Activated CD4-positive, alpha-beta T cell treated with anti-CD3 and anti-CD28 coated beads, Interleukin-2, amount 10 ng/mL, durations not matched to agents 24 days and 14 days (primary cell): ENCODE measurements at regions of chr2 and their contacts with region 1.

Region 1: GRCh38 chr2:136117909-136118818 is at the start of gene CXCR4:
- DNase-seq: peak; percentile 97
- H3K4me3 Mint-ChIP-seq: peak within 1 kb of the TSS; percentile 98
- H3K27ac Mint-ChIP-seq: peak within 1 kb of the TSS; percentile 95
- H3K4me1 Mint-ChIP-seq: peaks cover 63% of the 10 kb centered on the region
- H3K27me3 Mint-ChIP-seq: peaks cover 35% of the 10 kb centered on the region
- total RNA-seq, gene CXCR4: 88.8 and 92.7 TPM in 2 replicates

Region 2: DNA sequence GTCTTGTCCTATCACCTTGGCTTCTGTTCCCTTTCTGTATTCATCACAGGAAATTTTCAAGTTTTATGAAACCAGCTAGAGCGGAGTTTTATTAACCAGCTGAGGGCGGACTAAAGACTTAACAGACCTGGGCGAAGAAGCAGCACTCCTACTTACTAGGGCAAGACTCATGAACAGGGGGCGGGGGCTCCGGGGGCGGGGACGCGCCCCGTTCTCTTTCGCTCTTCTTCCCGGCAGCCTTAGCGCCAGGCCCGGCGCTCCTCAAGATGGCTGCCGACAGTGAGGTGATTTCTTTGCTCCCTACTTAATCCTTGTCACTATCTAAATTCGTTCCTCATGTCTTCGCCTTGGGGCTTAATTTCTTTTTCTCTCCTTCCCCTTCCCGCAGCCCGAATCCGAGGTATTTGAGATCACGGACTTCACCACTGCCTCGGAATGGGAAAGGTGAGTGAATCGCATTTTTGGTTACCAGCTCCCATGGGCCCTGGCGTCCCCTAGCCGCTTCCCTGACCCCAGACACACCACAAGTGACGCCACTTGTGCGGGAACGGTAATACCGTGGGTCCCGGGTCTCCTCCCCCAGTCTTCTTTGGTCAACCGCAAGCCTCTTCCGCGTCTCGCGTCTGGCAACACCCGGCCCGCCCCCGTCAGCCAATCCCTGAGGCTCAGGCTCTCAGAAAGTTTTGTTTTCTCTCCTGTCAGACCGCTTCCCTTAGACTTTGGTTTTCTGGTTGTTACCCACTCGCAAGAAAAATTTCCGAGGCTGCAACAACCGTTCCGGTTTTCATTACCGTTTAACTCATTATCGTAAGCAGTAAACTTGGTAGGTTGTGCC is 1065.9 kb before region 1 on chr2 and contains the start of gene RAB3GAP1:
- intact Hi-C with region 1: loop called (anchors 2 kb)
- DNase-seq: peak; percentile 98
- H3K4me3 Mint-ChIP-seq: peak within 1 kb of the TSS; percentile 94
- H3K27ac Mint-ChIP-seq: peak within 1 kb of the TSS; percentile 100
- H3K4me1 Mint-ChIP-seq: peaks cover 38% of the 10 kb centered on the region
- H3K27me3 Mint-ChIP-seq: peaks cover 2% of the 10 kb centered on the region
- total RNA-seq, gene RAB3GAP1: 24.2 and 26.3 TPM in 2 replicates

Region 3: DNA sequence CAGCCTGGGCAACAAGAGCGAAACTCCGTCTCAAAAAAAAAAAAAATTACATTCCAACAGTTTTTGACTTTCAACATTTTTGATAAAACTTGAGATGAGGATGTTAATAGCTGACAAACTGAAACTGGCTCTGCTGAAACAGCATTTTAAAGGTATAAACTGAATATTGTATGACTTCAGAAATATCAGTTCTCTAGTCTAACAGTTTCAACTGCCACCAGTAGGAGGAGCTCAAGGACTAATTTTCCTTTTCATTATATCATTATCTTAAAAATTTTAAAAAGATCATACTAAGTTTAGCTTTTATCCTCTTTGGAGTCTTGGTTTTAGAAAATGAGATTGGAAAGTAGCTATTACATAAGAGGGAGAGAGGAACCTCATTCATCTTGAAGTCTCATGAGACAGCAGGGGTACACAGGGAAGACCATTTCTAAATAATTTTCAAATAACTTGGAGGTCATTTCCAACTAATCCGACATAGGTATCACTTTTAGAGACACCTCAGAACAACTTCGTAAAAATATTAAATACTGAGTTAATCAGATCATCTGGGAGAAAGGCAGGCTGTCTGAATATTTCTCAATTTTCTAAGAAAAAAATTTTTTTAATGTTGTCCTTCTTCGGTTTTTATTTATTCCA is 204.3 kb before region 1 on chr2:
- intact Hi-C with region 1: loop called (anchors 1 kb)
- DNase-seq: peak; percentile 86
- H3K4me3 Mint-ChIP-seq: no peak overlapping the region
- H3K27ac Mint-ChIP-seq: no peak overlapping the region
- H3K4me1 Mint-ChIP-seq: peaks cover 18% of the 10 kb centered on the region
- H3K27me3 Mint-ChIP-seq: no peaks in the 10 kb centered on the region

Region 4: GRCh38 chr2:136051001-136051724 is 67.0 kb before region 1 on chr2:
- intact Hi-C with region 1: loop called (anchors 1 kb)
- DNase-seq: peak; percentile 79
- H3K4me3 Mint-ChIP-seq: peak overlapping the region; percentile 74
- H3K27ac Mint-ChIP-seq: peak overlapping the region; percentile 94
- H3K4me1 Mint-ChIP-seq: peaks cover 78% of the 10 kb centered on the region
- H3K27me3 Mint-ChIP-seq: no peaks in the 10 kb centered on the region

Region 5: DNA sequence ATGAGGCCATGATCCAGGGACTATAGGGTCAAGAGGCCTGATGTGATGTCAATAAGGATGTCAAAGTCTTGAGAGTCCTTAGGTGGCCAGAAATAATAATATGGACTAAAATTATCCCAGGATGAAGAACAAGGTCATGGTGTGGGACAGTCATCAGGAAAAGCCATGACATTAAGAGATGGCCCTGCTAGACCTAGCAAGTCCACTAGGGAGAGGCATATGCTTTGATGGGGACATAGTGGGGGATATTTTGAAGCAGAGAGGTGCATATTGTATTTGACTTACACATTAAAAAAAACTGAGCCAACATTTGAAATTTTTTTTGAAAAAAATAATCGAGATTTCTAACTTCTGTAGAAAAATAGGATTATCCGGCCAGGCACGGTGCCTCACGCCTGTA is 53.1 kb after region 1 on chr2:
- intact Hi-C with region 1: no loop called
- DNase-seq: no peak
- H3K4me3 Mint-ChIP-seq: no peak overlapping the region
- H3K27ac Mint-ChIP-seq: no peak overlapping the region
- H3K4me1 Mint-ChIP-seq: peaks cover 4% of the 10 kb centered on the region
- H3K27me3 Mint-ChIP-seq: peaks cover 6% of the 10 kb centered on the region

Region 6: GRCh38 chr2:136238286-136239078 is 120.3 kb after region 1 on chr2:
- intact Hi-C with region 1: loop called (anchors 2 kb)
- DNase-seq: peak; percentile 81
- H3K4me3 Mint-ChIP-seq: peak overlapping the region; percentile 43
- H3K27ac Mint-ChIP-seq: peak overlapping the region; percentile 89
- H3K4me1 Mint-ChIP-seq: peaks cover 45% of the 10 kb centered on the region
- H3K27me3 Mint-ChIP-seq: no peaks in the 10 kb centered on the region

Region 7: GRCh38 chr2:136362676-136363390 is 244.7 kb after region 1 on chr2:
- intact Hi-C with region 1: loop called (anchors 5 kb)
- DNase-seq: peak; percentile 75
- H3K4me3 Mint-ChIP-seq: peak overlapping the region; percentile 34
- H3K27ac Mint-ChIP-seq: peak overlapping the region; percentile 57
- H3K4me1 Mint-ChIP-seq: peaks cover 40% of the 10 kb centered on the region
- H3K27me3 Mint-ChIP-seq: no peaks in the 10 kb centered on the region